BJ (cell line): ENCODE measurements at regions of chr11 and their contacts with region 1.

Region 1: GRCh38 chr11:93741094-93741881 is at the starts of genes C11orf54 and TAF1D:
- DNase-seq: peak; percentile 87
- H3K4me3 ChIP-seq: peak within 1 kb of the TSS; percentile 82
- H3K27me3 ChIP-seq: no peaks in the 10 kb centered on the region
- CTCF ChIP-seq: 0 out of 2 replicates have a peak, but pooled peaks have one; percentile 5
- polyA plus RNA-seq, gene C11orf54: 6.8 and 10.8 TPM in 2 replicates
- polyA plus RNA-seq, gene TAF1D: 32.8 and 87.6 TPM in 2 replicates

Region 2: GRCh38 chr11:94926698-94927237 is 1185.5 kb after region 1 on chr11:
- CTCF ChIA-PET with region 1: no interaction called
- POLR2A ChIA-PET with region 1: interaction called, 14 read pairs
- DNase-seq: peak; percentile 91
- H3K4me3 ChIP-seq: no peak overlapping the region
- H3K27me3 ChIP-seq: no peaks in the 10 kb centered on the region
- CTCF ChIP-seq: no peak